ENCODE measurements at regions of chr18 and their contacts with region 1.

Region 1: GRCh38 chr18:50967714-50968661 is at the start of gene ELAC1:
- DNase-seq: peak; percentile 63 to 70 (median 67)
- H3K4me3 ChIP-seq: peak within 1 kb of the TSS; percentile 80 to 91 (median 85)
- H3K4me3 Mint-ChIP-seq: peak within 1 kb of the TSS; percentile 88 to 96
- H3K27ac ChIP-seq: peak within 1 kb of the TSS; percentile 85 to 90
- H3K27ac Mint-ChIP-seq: peak within 1 kb of the TSS; percentile 85 to 96 (median 93)
- H3K4me1 ChIP-seq: peaks cover 11 to 15% of the 10 kb centered on the region in 2 donors
- H3K4me1 Mint-ChIP-seq: peaks cover 18% of the 10 kb centered on the region
- H3K27me3 ChIP-seq: no peaks in the 10 kb centered on the region
- H3K27me3 Mint-ChIP-seq: peaks cover 0 to 3% (median 0%) of the 10 kb centered on the region in 3 donors
- CTCF ChIP-seq: no peak
- polyA plus RNA-seq, gene ELAC1: 2.6 to 11.5 (median 4.5) TPM

Region 2: GRCh38 chr18:51074605-51075004 is 106.6 kb after region 1 on chr18:
- intact Hi-C with region 1: no loop called
- DNase-seq: peak; percentile 22 to 42 (median 38)
- H3K4me3 ChIP-seq: no peak overlapping the region
- H3K4me3 Mint-ChIP-seq: no peak overlapping the region
- H3K27ac ChIP-seq: peak overlapping the region; percentile 56 to 69
- H3K27ac Mint-ChIP-seq: peak overlapping the region; percentile 54 to 87 (median 61)
- H3K4me1 ChIP-seq: peaks cover 11 to 15% of the 10 kb centered on the region in 2 donors
- H3K4me1 Mint-ChIP-seq: peaks cover 16% of the 10 kb centered on the region
- H3K27me3 ChIP-seq: no peaks in the 10 kb centered on the region
- H3K27me3 Mint-ChIP-seq: no peaks in the 10 kb centered on the region
- CTCF ChIP-seq: no peak

Region 3: GRCh38 chr18:51197661-51198424 is 229.9 kb after region 1 on chr18 and contains the start of gene MEX3C:
- intact Hi-C with region 1: loop called in 1 of 2 experiments (anchors 10 kb)
- DNase-seq: peak; percentile 97 to 99 (median 99)
- H3K4me3 ChIP-seq: peak within 1 kb of the TSS; percentile 72 to 86 (median 77)
- H3K4me3 Mint-ChIP-seq: peak within 1 kb of the TSS; percentile 94 to 98
- H3K27ac ChIP-seq: peak within 1 kb of the TSS; percentile 91 to 93
- H3K27ac Mint-ChIP-seq: peak within 1 kb of the TSS; percentile 95 to 99 (median 99)
- H3K4me1 ChIP-seq: peaks cover 16% of the 10 kb centered on the region in 2 donors
- H3K4me1 Mint-ChIP-seq: peaks cover 26% of the 10 kb centered on the region
- H3K27me3 ChIP-seq: no peaks in the 10 kb centered on the region
- H3K27me3 Mint-ChIP-seq: peaks cover 0 to 1% (median 1%) of the 10 kb centered on the region in 3 donors
- CTCF ChIP-seq: no peak
- polyA plus RNA-seq, gene MEX3C: 2.3 to 41.3 (median 5.2) TPM

Measured in CD14-positive monocyte (primary cell).